ENCODE measurements at regions of chr6 and their contacts with region 1.

Region 1: DNA sequence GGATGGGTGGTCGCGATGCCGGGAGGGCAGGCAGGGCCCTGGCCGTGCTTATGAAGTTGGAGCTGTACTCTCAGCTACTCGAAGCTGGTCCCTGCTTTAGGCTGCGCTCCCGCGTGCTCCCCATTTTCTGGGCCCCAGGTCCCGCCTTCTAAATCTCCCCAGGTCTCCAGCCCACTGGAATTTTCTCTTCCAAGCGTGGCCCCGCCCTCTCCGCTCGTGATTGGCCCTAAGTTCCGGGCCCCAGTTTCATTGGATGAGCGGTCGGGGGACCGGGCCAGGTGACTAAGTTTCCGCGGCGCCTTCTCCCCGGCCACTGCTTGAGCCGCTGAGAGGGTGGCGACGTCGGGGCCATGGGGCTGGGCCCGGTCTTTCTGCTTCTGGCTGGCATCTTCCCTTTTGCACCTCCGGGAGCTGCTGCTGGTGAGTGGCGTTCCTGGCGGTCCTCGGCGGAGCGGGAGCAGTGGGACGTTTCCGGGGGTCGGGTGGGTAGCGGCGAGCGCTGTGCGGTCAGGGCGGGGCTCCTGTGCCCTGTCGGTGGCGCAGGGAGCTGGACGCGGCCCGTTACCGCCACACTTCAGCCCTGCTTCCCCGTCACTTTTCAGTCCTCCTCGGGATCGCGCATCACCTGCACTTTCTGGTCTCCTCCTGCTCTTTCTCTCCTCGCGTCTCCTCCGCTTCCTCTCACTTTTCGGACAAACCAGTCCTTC is at the start of gene MICA:
- DNase-seq: peak; percentile 82
- ATAC-seq: peak; percentile 78
- H3K4me3 Mint-ChIP-seq: peak within 1 kb of the TSS; percentile 79
- H3K27ac Mint-ChIP-seq: peak within 1 kb of the TSS; percentile 81
- H3K4me1 Mint-ChIP-seq: peaks cover 67% of the 10 kb centered on the region
- H3K27me3 Mint-ChIP-seq: no peaks in the 10 kb centered on the region
- total RNA-seq, gene MICA: 15.6 to 24.7 TPM

Region 2: DNA sequence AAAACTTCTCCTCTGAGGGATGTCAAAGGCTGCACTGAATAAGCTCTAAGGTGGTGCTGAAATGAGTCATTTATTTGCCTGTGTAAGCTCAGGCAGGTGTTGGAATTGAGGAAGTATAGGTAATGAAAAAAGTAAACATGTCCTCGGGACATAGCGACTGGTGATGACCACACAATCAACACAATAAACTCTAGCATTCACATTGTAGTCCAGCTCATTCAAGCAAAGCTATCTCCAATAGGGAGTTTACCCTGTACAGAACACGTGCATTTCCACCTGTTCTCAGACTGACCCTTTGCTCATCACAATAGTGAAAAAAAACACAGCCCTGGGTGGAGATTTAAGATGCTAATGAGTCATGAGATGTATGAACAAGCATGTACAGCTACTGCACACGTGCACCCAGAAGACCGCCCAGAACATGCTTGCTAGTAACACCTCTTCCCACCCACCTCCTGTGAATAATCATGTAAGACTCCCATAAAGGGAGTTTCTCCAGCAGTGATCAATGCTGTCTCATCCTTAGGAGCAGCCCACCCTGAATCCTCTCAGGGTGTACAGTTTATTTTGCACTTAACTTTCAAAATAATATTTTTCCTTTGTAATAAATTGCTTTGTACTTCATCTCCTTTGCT is 200.0 kb before region 1 on chr6:
- CTCF ChIA-PET with region 1: no interaction called
- DNase-seq: peak; percentile 71
- ATAC-seq: peak; percentile 69
- H3K4me3 Mint-ChIP-seq: peak overlapping the region; percentile 82
- H3K27ac Mint-ChIP-seq: peak overlapping the region; percentile 95
- H3K4me1 Mint-ChIP-seq: peaks cover 63% of the 10 kb centered on the region
- H3K27me3 Mint-ChIP-seq: no peaks in the 10 kb centered on the region

Region 3: GRCh38 chr6:31414771-31415265 is 11.4 kb after region 1 on chr6:
- CTCF ChIA-PET with region 1: no interaction called
- DNase-seq: no peak
- ATAC-seq: no peak
- H3K4me3 Mint-ChIP-seq: no peak overlapping the region
- H3K27ac Mint-ChIP-seq: peak overlapping the region; percentile 8
- H3K4me1 Mint-ChIP-seq: peaks cover under 1% of the 10 kb centered on the region
- H3K27me3 Mint-ChIP-seq: no peaks in the 10 kb centered on the region

Region 4: GRCh38 chr6:31441365-31442267 is 38.2 kb after region 1 on chr6:
- CTCF ChIA-PET with region 1: interaction called, 93 read pairs
- DNase-seq: peak; percentile 88
- ATAC-seq: peak; percentile 100
- H3K4me3 Mint-ChIP-seq: no peak overlapping the region
- H3K27ac Mint-ChIP-seq: no peak overlapping the region
- H3K4me1 Mint-ChIP-seq: peaks cover 2% of the 10 kb centered on the region
- H3K27me3 Mint-ChIP-seq: peaks cover 69% of the 10 kb centered on the region

Region 5: DNA sequence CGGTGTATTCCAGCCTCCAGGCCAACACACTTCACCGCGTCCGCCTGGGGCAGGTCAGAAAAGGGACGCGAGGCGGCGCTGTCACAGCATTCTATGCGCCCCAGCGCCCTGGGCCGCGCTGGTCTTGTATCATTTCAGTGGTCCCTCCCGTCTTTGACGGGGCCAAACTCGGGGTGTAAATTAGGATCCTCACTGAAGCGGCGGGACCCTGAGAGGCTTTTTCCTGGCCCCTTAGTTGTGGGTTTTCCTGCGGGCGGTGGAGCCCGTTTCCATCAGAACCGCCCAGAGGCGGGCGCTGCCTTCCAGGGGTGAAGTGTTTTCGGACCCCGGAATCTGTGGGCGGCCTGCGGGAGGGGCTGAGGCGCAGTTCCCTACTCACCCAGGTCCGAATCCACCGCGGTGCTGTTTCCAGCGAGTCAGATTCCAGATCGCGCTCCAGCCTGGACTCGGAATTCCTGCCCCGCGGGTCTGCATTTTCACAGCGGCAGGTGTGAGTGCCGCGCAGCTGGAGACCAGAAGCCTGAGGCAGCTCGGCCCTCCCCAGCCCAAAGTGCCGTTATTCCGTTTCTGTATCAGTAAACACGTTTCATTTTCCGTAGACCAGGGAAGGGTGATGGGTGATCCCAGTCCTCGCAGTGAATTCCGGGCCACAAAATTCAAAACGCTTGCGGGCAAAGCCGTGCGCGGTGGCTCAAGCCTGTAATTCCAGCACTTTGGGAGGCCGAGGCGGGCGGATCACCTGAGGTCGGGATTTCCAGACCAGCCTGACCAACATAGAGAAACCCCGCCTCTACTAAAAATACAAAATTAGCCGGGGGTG is 90.6 kb after region 1 on chr6:
- CTCF ChIA-PET with region 1: interaction called, 15 read pairs
- DNase-seq: peak; percentile 86
- ATAC-seq: peak; percentile 54
- H3K4me3 Mint-ChIP-seq: peak overlapping the region; percentile 76
- H3K27ac Mint-ChIP-seq: peak overlapping the region; percentile 96
- H3K4me1 Mint-ChIP-seq: peaks cover 56% of the 10 kb centered on the region
- H3K27me3 Mint-ChIP-seq: no peaks in the 10 kb centered on the region